Activated naive CD4-positive, alpha-beta T cell treated with anti-CD3 and anti-CD28 coated beads for 36 hours (primary cell): ENCODE measurements at regions of chr6 and their contacts with region 1.

Region 1: GRCh38 chr6:29964887-29965562 is 22.7 kb downstream of the HLA-A start:
- DNase-seq: peak; percentile 91
- H3K4me3 Mint-ChIP-seq: peak overlapping the region; percentile 86
- H3K27ac Mint-ChIP-seq: peak overlapping the region; percentile 98
- H3K4me1 Mint-ChIP-seq: peaks cover 41% of the 10 kb centered on the region
- H3K27me3 Mint-ChIP-seq: no peaks in the 10 kb centered on the region

Region 2: DNA sequence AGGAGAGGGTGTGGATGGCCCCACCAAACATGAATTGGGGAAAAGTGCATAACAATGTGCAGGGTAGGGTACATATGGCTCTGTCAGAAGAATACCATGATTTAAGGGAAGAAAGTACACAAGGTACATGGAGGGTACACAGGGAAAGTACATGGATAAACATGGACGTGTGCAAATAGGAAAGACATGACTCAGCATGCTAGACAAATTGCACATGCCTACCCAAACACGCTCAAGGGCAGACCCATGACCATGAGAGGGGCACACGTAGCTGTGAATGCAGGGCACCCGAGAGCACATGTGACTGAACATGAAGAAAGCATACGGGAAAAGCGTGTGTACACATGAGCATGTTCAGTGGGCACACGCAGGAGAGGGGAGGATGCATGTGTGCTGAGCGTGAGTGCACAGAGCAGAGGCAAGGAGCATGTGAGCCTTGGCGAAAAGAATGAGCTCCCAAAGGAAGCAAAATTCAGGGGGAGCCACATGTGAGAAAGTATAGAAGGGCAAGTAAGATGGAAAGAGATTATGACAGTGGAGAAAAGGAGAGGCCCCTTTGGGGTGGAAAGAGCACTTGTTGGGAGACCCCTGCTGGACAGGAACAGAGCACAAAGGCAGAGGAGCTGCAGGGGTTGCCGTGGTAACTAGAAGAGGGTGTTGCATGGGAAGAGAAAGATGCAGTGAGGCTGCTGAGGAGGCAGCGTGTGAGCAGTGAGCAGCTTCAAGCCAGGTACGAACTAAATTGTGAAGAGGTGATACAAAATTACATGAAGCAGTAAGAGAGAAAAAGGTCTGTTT is 362.3 kb before region 1 on chr6:
- CTCF ChIA-PET with region 1: no interaction called
- intact Hi-C with region 1: no loop called
- DNase-seq: peak; percentile 12
- H3K4me3 Mint-ChIP-seq: no peak overlapping the region
- H3K27ac Mint-ChIP-seq: no peak overlapping the region
- H3K4me1 Mint-ChIP-seq: no peaks in the 10 kb centered on the region
- H3K27me3 Mint-ChIP-seq: no peaks in the 10 kb centered on the region

Region 3: DNA sequence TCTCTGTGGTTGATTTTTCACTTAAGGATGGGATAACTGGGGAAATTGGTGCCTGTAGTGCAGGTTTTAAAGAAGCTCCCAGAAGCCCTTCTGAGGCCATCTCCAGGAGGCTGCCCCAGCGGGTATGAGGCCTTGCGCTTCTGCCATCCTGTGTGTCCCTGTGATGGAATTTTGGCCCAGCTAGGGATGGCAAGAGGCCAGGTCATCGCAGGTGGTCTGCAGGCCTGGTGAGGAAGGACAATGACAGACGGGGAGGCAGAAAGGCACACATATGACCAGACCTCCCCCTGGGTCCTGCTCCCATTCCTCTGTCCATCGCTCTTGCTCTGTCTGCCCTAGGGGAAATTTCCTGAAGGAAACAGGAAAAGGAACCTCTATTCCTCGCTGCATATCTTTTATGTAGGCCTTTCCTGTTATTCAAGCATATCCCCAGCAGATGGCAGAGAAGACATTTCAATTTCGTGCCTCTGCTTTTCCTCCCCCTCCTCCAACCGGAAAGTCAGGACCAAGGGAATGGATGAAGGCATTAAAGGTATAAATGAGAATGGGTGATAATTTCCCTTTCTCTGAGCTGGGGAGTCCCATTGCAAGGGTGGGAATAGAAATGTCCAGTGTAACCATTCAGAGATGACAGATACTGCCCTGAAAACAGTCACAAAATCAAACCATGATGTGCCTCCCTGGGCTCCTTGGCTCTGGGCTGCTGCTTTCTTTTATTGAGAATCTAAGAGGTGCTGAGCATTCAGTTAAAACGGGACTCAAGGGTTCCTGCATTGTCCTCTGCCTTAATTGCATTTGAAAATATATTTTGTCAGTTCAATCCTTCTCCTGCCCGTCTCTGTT is 259.4 kb before region 1 on chr6:
- CTCF ChIA-PET with region 1: no interaction called
- intact Hi-C with region 1: loop called (anchors 5 kb)
- DNase-seq: no peak
- H3K4me3 Mint-ChIP-seq: no peak overlapping the region
- H3K27ac Mint-ChIP-seq: no peak overlapping the region
- H3K4me1 Mint-ChIP-seq: peaks cover 48% of the 10 kb centered on the region
- H3K27me3 Mint-ChIP-seq: peaks cover 12% of the 10 kb centered on the region

Region 4: DNA sequence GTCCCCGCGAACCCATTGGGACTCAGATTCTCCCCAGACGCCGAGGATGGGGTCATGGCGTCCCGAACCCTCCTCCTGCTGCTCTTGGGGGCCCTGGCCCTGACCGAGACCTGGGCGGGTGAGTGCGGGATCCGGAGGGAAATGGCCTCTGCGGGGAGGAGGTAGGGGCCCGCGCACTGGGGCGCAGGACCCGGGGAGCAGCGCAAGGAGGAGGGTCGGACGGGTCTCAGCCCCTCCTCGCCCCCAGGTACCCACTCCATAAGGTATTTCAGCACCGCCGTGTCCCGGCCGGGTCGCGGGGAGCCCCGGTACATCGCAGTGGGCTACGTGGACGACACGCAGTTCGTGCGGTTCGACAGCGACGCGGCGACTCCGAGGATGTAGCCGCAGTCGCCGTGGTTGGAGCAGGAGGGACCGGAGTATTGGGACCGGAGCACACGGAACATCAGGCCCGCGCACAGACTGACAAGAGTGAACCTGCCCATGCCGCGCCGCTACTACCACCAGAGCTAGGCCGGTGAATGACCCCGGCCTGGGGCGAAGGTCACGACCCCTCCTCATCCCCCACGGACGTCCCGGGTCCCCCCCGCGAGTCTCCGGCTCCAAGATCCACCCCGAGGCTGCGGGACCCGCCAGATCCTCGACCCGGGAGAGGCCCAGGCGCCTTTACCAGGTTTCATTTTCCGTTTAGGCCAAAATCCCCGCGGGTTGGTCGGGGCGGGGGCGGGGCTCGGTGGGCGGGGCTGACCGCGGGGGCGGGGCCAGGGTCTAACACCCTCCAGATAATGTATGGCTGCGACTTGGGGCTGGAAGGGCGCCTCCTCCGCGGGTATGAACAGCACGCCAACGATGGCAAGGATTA is 38.4 kb before region 1 on chr6:
- CTCF ChIA-PET with region 1: interaction called, 4 read pairs
- intact Hi-C with region 1: loop called (anchors 1 kb)
- DNase-seq: peak; percentile 90
- H3K4me3 Mint-ChIP-seq: peak overlapping the region; percentile 96
- H3K27ac Mint-ChIP-seq: peak overlapping the region; percentile 94
- H3K4me1 Mint-ChIP-seq: peaks cover 31% of the 10 kb centered on the region
- H3K27me3 Mint-ChIP-seq: no peaks in the 10 kb centered on the region

Region 5: DNA sequence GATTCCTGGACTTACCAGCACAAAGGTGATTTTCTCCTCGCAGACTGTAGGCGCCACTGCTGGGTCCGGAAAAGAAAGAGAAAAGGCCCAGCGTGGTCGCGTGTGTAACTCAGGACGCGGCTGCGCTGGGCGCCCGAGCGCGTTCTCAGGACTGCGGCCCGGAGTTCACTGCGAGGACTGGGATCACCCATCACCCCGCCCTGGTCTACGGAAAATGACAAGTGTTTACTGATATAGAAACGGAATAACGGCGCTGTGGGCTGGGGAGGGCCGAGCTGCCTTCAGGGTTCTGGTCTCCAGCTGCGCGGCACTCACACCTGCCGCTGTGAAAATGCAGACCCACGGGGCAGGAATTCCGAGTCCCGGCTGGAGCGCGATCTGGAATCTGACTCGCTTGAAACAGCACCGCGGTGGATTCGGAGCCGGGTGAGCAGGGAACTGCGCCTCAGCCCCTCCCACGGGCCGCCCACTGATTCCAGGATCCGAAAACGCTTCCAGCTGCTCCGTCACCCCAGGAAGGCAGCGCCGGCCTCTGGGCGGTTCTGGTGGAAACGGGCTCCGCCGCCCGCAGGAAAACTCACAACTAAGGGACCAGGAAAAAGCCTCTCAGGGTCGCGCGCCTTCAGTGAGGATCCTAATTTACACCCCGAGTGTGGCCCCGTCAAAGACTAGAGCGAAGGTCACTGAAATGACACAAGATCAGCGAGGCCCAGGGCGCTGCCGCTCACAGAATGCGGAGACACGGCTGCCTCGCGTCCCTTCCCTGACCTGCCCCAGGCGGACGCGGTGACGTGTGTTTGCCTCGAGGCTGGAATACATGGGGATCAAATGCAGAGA is 11.8 kb after region 1 on chr6:
- CTCF ChIA-PET with region 1: interaction called, 11 read pairs
- intact Hi-C with region 1: loop called (anchors 1 kb)
- DNase-seq: peak; percentile 76
- H3K4me3 Mint-ChIP-seq: peak overlapping the region; percentile 81
- H3K27ac Mint-ChIP-seq: no peak overlapping the region
- H3K4me1 Mint-ChIP-seq: peaks cover 31% of the 10 kb centered on the region
- H3K27me3 Mint-ChIP-seq: peaks cover 34% of the 10 kb centered on the region

Region 6: GRCh38 chr6:30013291-30013922 is 48.4 kb after region 1 on chr6:
- CTCF ChIA-PET with region 1: interaction called, 4 read pairs
- intact Hi-C with region 1: loop called (anchors 5 kb)
- DNase-seq: peak; percentile 62
- H3K4me3 Mint-ChIP-seq: no peak overlapping the region
- H3K27ac Mint-ChIP-seq: no peak overlapping the region
- H3K4me1 Mint-ChIP-seq: no peaks in the 10 kb centered on the region
- H3K27me3 Mint-ChIP-seq: peaks cover 6% of the 10 kb centered on the region